Right ventricle myocardium superior (tissue), 1 donor: ENCODE measurements at regions of chr11 and their contacts with region 1.

Region 1: DNA sequence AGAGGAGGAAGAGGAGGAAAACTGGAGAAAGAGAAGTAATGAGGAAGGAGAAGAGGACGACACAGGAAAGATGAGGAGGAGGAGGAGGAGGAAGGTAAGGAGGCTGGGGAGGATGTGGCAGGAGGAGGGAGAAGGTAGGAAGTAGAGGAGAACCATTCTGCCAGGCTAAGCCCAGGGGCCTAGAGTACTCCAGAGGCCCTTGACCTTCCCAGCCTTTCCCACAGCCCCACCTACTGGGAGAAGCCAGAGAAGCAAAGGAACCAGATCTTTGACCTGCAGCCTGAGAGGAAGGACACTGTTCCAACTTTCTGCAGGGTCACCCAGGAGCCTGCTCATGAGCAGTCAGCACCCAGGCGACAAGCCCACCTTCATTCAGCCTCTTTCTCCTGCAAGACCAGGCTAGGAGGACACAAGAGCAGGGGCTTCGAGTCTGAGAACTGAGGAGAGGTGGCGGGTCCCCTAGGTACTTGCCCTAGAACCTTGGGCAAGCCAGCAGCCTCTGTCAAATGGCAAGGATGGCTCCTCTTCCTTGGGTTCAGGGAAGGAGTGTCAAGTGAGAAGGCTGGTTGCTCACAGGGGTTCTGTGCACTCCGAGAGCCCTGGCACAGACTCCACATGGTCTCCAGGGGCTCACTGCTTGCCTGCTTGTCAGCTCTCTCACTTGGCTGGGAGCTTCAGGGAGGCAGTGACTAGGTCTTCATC is 27.9 kb upstream of the OAF start:
- DNase-seq: peak; percentile 75
- ATAC-seq: no peak

Region 2: DNA sequence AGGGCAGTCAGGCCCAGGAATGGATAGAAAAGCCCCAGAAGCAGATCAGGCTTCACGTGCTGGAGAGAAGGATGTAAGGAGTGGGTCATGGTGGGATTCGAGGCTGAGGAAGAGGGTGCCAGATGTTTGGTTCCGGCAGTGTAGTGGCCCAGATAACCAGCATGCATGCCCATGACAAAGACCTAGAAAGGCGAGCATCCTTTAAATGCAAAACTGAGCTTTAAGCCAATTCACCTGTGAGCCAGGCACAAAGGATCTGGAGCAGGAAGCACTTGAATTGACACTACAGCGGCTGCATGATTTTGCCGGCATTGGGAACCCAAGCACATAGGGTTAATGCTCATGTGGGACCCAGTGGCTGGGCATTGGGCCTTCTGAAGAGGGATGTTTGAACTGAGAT is 230.5 kb before region 1 on chr11:
- intact Hi-C with region 1: no loop called
- DNase-seq: no peak
- ATAC-seq: no peak

Region 3: GRCh38 chr11:120215634-120216033 is 32.7 kb after region 1 on chr11:
- intact Hi-C with region 1: loop called (anchors 5 kb)
- DNase-seq: peak; percentile 66
- ATAC-seq: peak; percentile 32